Activated naive CD4-positive, alpha-beta T cell treated with anti-CD3 and anti-CD28 coated beads, Interleukin-2, amount 10 ng/mL, durations not matched to agents 7 days and 5 days (primary cell): ENCODE measurements at regions of chr3 and their contacts with region 1.

Region 1: GRCh38 chr3:25663347-25663868 is 1.3 kb downstream of the TOP2B start:
- DNase-seq: peak; percentile 42
- H3K4me3 Mint-ChIP-seq: peak overlapping the region; percentile 90
- H3K27ac Mint-ChIP-seq: peak overlapping the region; percentile 93
- H3K4me1 Mint-ChIP-seq: peaks cover 43% of the 10 kb centered on the region
- H3K27me3 Mint-ChIP-seq: peaks cover 4% of the 10 kb centered on the region

Region 2: DNA sequence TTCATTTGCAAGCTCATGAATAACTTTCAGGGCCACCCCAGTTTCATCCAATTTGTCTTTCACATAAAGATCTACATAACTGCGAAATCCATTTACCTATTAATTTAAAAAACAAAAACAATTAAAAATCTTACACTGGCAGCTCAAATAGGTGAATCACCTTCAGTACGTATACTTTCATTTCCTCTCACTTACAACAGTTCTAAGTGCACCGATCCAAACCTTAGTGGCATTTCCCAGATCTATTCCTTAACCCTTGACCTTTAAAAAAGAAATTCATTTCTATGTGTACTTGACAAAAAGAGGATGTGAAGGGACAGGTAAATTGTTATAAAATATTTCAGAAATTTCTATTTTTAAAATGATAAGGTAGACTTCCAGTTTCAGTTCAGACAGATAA is 29.5 kb before region 1 on chr3:
- CTCF ChIA-PET with region 1: no interaction called
- DNase-seq: no peak
- H3K4me3 Mint-ChIP-seq: no peak overlapping the region
- H3K27ac Mint-ChIP-seq: no peak overlapping the region
- H3K4me1 Mint-ChIP-seq: no peaks in the 10 kb centered on the region
- H3K27me3 Mint-ChIP-seq: no peaks in the 10 kb centered on the region

Region 3: DNA sequence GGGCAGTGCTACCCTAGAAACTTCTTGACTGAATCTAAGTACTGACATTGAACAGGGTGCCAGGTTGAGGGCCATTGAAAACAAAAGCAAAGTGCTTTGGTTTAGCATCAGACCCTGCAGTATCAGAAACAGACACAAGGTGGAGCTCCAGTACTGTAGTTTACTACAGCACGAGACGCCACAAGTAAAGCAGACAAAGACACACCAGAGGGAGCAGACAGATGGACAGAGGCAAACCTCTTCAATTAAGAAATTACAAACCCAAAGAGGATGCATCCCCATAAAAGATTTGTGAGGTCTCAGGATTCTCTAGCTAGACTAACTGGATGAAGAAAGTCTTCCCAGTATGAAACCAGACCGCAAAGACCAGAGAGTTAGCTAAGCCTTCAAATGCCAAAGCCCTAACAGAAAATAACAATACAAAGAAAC is 15.3 kb before region 1 on chr3:
- CTCF ChIA-PET with region 1: interaction called, 18 read pairs
- DNase-seq: peak; percentile 88
- H3K4me3 Mint-ChIP-seq: no peak overlapping the region
- H3K27ac Mint-ChIP-seq: no peak overlapping the region
- H3K4me1 Mint-ChIP-seq: peaks cover 18% of the 10 kb centered on the region
- H3K27me3 Mint-ChIP-seq: no peaks in the 10 kb centered on the region